Caco-2 (cell line): ENCODE measurements at regions of chr1 and their contacts with region 1.

Region 1: DNA sequence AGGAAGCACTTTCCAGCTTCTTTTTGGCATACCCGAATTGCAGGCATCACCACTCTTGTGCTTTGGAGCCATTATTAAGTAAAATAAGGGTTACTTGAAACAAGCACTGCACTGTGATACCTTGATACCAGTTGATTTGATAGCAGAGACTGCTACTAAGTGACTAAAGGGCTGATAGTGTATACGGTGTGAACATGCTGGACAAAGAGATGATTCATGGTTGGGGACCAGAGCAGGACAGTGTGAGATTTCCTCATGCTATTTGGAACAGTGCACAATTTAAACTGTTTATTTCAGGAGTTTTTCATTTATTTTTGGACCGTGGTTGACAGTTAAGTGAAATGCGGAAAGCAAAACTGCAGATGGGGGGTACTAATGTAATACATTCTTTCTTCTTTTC is 9.9 kb downstream of the RPS27 start:
- DNase-seq: no peak
- H3K4me3 ChIP-seq: no peak overlapping the region
- H3K4me3 Mint-ChIP-seq: no peak overlapping the region
- H3K27ac Mint-ChIP-seq: peak overlapping the region; percentile 97
- H3K4me1 ChIP-seq: peaks cover 32% of the 10 kb centered on the region
- H3K4me1 Mint-ChIP-seq: peaks cover 16% of the 10 kb centered on the region
- H3K27me3 ChIP-seq: no peaks in the 10 kb centered on the region
- H3K27me3 Mint-ChIP-seq: no peaks in the 10 kb centered on the region
- CTCF ChIP-seq: no peak

Region 2: GRCh38 chr1:154104433-154105082 is 104.1 kb after region 1 on chr1:
- CTCF ChIA-PET with region 1: interaction called, 5 read pairs
- POLR2A ChIA-PET with region 1: no interaction called
- intact Hi-C with region 1: loop called (anchors 5 kb)
- DNase-seq: peak; percentile 39 to 52
- H3K4me3 ChIP-seq: no peak overlapping the region
- H3K4me3 Mint-ChIP-seq: no peak overlapping the region
- H3K27ac Mint-ChIP-seq: no peak overlapping the region
- H3K4me1 ChIP-seq: peaks cover 10% of the 10 kb centered on the region; the same call in 1 of the 2 replicates
- H3K4me1 Mint-ChIP-seq: no peaks in the 10 kb centered on the region
- H3K27me3 ChIP-seq: no peaks in the 10 kb centered on the region
- H3K27me3 Mint-ChIP-seq: no peaks in the 10 kb centered on the region
- CTCF ChIP-seq: peak; percentile 35 to 37

Region 3: GRCh38 chr1:154115180-154115579 is 114.8 kb after region 1 on chr1:
- CTCF ChIA-PET with region 1: interaction called, 3 read pairs
- POLR2A ChIA-PET with region 1: no interaction called
- intact Hi-C with region 1: loop called (anchors 5 kb)
- DNase-seq: no peak
- H3K4me3 ChIP-seq: no peak overlapping the region
- H3K4me3 Mint-ChIP-seq: no peak overlapping the region
- H3K27ac Mint-ChIP-seq: no peak overlapping the region
- H3K4me1 ChIP-seq: 0 out of 2 replicates have a peak, but pooled peaks cover 4% of the 10 kb centered on the region
- H3K4me1 Mint-ChIP-seq: peaks cover 6% of the 10 kb centered on the region
- H3K27me3 ChIP-seq: no peaks in the 10 kb centered on the region
- H3K27me3 Mint-ChIP-seq: no peaks in the 10 kb centered on the region
- CTCF ChIP-seq: no peak

Region 4: DNA sequence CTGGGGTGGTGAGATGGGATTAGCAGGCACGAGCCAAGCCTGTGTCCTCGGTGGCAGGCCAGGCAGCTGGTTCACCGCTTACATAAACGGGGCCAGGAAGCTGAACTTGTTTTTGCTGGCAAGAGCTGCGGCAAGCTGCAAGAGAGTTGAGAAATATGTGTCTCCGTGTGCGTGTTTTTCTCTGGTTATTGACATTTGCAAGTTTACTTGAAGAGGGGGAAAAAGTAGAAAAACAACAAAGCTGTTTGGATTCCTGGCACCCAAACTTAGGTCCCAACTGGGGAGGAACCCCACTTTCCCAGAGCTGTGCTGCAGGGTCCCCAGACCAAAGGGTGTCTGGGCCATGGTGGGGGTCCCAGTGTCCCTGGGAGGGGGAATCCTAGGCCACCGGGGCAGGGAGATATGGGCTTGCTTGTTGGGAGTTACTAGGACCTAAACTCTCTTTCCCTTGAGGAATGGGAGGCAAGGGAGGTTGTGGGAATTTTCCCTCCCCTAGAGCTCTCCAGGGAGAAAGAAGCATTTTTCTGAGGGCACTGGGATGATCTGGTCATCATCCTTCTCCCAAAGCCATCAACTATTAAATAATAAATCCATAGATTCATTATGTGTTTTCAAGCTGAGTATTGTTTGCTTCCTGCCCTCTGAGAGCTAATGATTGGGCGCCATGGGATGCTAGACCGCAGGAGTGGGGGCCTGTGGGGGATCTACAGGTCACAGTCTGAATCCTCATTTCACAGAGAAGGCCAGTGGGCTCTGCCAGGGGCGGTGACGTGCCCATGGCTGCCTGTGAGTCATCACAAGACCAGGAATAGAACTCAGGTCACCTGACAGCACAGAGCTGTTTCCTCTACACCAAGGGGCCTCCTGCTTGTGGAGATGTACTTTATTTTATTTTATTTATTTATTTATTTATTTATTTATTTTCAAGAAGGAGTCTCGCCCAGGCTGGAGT is 419.5 kb after region 1 on chr1:
- CTCF ChIA-PET with region 1: no interaction called
- POLR2A ChIA-PET with region 1: no interaction called
- intact Hi-C with region 1: no loop called
- DNase-seq: no peak
- H3K4me3 ChIP-seq: no peak overlapping the region
- H3K4me3 Mint-ChIP-seq: no peak overlapping the region
- H3K27ac Mint-ChIP-seq: peak overlapping the region; percentile 66
- H3K4me1 ChIP-seq: peaks cover 19% of the 10 kb centered on the region
- H3K4me1 Mint-ChIP-seq: peaks cover 9% of the 10 kb centered on the region
- H3K27me3 ChIP-seq: no peaks in the 10 kb centered on the region
- H3K27me3 Mint-ChIP-seq: no peaks in the 10 kb centered on the region
- CTCF ChIP-seq: no peak